PC-3 (cell line): ENCODE measurements at regions of chr11 and their contacts with region 1.

Region 1: GRCh38 chr11:123560006-123560405 is 94.4 kb downstream of the SCN3B start:
- DNase-seq: no peak
- ATAC-seq: no peak
- H3K4me3 ChIP-seq: no peak overlapping the region
- H3K27ac ChIP-seq: no peak overlapping the region
- H3K4me1 ChIP-seq: no peaks in the 10 kb centered on the region; the same call in 1 of the 2 replicates
- H3K27me3 ChIP-seq: no peaks in the 10 kb centered on the region
- CTCF ChIP-seq: no peak

Region 2: DNA sequence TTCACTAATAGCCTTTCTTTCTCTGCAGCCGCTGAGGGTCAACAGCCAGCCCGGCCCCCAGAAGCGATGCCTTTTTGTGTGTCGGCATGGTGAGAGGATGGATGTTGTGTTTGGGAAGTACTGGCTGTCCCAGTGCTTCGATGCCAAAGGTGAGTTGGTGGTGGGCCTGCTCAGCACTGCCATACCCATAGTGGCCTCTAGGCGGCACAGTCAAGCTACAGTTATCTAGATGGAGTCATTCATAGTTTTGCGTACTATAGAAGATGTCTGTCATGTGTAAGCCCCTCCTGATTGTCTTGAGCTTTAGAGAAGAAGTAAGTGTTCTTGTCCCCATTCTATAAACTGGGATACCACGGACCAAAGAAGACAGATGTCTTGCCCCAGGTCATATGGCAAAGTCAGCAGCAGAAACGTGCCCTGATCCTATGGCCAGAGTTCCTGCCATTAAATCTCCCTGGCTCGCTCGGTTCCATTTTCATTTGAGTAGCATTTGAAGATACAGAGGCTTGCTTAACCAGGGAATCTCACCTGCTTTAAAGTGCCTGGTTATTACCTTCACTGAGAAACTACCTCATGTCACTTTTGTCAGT is 763.8 kb before region 1 on chr11:
- CTCF ChIA-PET with region 1: no interaction called
- POLR2A ChIA-PET with region 1: no interaction called
- intact Hi-C with region 1: no loop called
- DNase-seq: peak; percentile 79
- ATAC-seq: peak; percentile 69
- H3K4me3 ChIP-seq: no peak overlapping the region
- H3K27ac ChIP-seq: no peak overlapping the region
- H3K4me1 ChIP-seq: peaks cover 8% of the 10 kb centered on the region; the same call in 1 of the 2 replicates
- H3K27me3 ChIP-seq: no peaks in the 10 kb centered on the region
- CTCF ChIP-seq: peak; percentile 98

Region 3: GRCh38 chr11:123511037-123511870 is 48.8 kb before region 1 on chr11:
- CTCF ChIA-PET with region 1: interaction called, 11 read pairs
- POLR2A ChIA-PET with region 1: no interaction called
- intact Hi-C with region 1: loop called (anchors 1 kb)
- DNase-seq: peak; percentile 96
- ATAC-seq: peak; percentile 99
- H3K4me3 ChIP-seq: no peak overlapping the region
- H3K27ac ChIP-seq: no peak overlapping the region
- H3K4me1 ChIP-seq: peaks cover 10% of the 10 kb centered on the region; the same call in 1 of the 2 replicates
- H3K27me3 ChIP-seq: no peaks in the 10 kb centered on the region
- CTCF ChIP-seq: peak; percentile 96

Region 4: GRCh38 chr11:123519055-123519796 is 40.8 kb before region 1 on chr11:
- CTCF ChIA-PET with region 1: no interaction called
- POLR2A ChIA-PET with region 1: interaction called, 3 read pairs
- intact Hi-C with region 1: loop called (anchors 2 kb)
- DNase-seq: peak; percentile 81
- ATAC-seq: peak; percentile 93
- H3K4me3 ChIP-seq: no peak overlapping the region; the same call in 1 of the 2 replicates
- H3K27ac ChIP-seq: peak overlapping the region; percentile 67
- H3K4me1 ChIP-seq: peaks cover 27% of the 10 kb centered on the region
- H3K27me3 ChIP-seq: no peaks in the 10 kb centered on the region
- CTCF ChIP-seq: no peak